ENCODE measurements at regions of chr16 and their contacts with region 1.

Region 1: DNA sequence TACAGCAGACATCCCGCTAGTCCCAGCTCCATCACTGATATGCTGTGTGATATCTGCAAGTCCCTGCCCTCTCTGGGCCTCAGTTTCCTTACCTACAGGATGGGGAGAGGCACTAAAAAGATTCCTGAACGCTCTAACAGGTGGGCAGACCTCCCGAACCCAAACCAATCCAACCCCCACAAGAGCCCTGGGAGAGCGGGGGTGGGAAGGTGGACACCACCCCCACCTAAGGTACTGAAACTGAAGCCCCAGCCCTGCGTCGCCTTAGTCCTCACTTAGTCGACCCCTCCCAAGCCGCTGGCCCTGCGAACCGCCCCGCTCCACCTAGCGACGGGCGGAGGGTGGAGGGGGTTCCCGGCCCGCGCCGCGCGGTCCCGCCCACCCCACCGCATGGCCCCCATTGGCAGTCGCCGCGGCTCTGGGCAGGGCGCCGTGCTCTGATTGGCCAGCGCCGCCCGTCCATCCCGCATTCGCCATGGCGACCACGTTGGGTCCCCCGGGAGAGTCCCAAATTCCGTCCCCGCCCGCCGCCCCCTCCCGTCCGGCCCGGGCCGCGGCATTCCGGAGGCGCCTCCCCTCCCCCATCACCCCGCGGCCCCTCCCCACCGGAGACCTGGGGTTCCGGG is 578 bp downstream of the CCDC102A start:
- DNase-seq: peak; percentile 97
- H3K4me3 Mint-ChIP-seq: peak overlapping the region; percentile 85
- H3K27ac Mint-ChIP-seq: peak overlapping the region; percentile 88
- H3K4me1 Mint-ChIP-seq: peaks cover 70% of the 10 kb centered on the region
- H3K27me3 Mint-ChIP-seq: no peaks in the 10 kb centered on the region

Region 2: DNA sequence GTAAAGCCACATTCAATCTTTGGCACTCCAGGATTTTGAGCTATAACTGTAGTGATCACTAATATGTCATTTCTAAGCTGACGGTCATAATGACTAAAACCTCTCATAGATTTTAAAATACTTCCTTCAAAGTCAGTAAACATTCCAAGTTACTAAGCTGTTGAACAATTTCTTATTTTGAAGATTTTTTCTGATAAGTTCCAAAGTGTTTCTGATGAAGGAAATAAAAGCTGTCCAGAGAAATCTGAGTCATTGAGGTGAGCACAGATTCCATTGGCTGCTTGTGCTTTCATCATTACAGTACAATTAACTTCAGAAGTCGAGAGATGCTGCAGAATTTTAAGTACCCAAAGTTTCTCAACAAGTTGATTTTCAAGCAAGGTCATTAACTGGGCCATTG is 522.6 kb before region 1 on chr16:
- CTCF ChIA-PET with region 1: no interaction called
- intact Hi-C with region 1: loop called (anchors 10 kb)
- DNase-seq: no peak
- H3K4me3 Mint-ChIP-seq: no peak overlapping the region
- H3K27ac Mint-ChIP-seq: peak overlapping the region; percentile 97
- H3K4me1 Mint-ChIP-seq: peaks cover 85% of the 10 kb centered on the region
- H3K27me3 Mint-ChIP-seq: no peaks in the 10 kb centered on the region

Region 3: GRCh38 chr16:57300387-57301125 is 235.2 kb before region 1 on chr16:
- CTCF ChIA-PET with region 1: no interaction called
- intact Hi-C with region 1: loop called (anchors 1 kb)
- DNase-seq: peak; percentile 100
- H3K4me3 Mint-ChIP-seq: no peak overlapping the region
- H3K27ac Mint-ChIP-seq: no peak overlapping the region
- H3K4me1 Mint-ChIP-seq: peaks cover 8% of the 10 kb centered on the region
- H3K27me3 Mint-ChIP-seq: peaks cover 2% of the 10 kb centered on the region

Region 4: GRCh38 chr16:57485916-57486857 is 49.6 kb before region 1 on chr16 and contains the start of gene DOK4:
- CTCF ChIA-PET with region 1: interaction called, 3 read pairs
- intact Hi-C with region 1: loop called (anchors 1 kb)
- DNase-seq: peak; percentile 79
- H3K4me3 Mint-ChIP-seq: peak within 1 kb of the TSS; percentile 77
- H3K27ac Mint-ChIP-seq: peak within 1 kb of the TSS; percentile 63
- H3K4me1 Mint-ChIP-seq: peaks cover 18% of the 10 kb centered on the region
- H3K27me3 Mint-ChIP-seq: no peaks in the 10 kb centered on the region
- total RNA-seq, gene DOK4: 5.0 to 6.2 TPM

Region 5: GRCh38 chr16:57600048-57600835 is 64.4 kb after region 1 on chr16:
- CTCF ChIA-PET with region 1: interaction called, 3 read pairs
- intact Hi-C with region 1: loop called (anchors 1 kb)
- DNase-seq: peak; percentile 65
- H3K4me3 Mint-ChIP-seq: no peak overlapping the region
- H3K27ac Mint-ChIP-seq: no peak overlapping the region
- H3K4me1 Mint-ChIP-seq: peaks cover 25% of the 10 kb centered on the region
- H3K27me3 Mint-ChIP-seq: no peaks in the 10 kb centered on the region

Region 6: DNA sequence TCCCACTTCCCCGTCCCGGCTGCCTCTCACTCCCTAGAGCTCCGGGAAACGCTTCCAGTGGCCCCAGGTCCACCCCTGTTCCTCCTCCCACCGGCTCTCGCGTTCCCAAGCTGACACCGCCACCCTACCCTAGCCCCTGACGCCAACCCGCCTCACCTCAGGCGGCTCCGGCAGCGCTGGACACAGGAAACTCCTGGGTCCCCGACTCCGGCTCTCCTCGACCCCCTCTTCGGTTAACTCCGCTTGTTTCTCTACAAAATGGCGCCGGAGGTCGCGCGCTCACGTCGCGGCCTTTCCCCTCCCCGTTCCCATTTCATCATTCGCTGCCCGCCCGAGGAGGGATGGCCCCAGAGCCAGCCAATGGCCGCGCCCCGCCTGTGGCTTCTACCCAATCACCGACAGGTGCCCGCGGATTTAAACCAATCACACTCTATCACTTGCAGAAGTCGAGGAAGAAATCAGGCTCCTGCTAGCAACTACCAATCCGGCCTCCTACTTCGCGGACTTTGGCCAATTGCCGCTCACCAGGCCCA is 1093.8 kb after region 1 on chr16 and contains the start of gene CNOT1:
- CTCF ChIA-PET with region 1: no interaction called
- intact Hi-C with region 1: loop called (anchors 2 kb)
- DNase-seq: peak; percentile 99
- H3K4me3 Mint-ChIP-seq: peak within 1 kb of the TSS; percentile 99
- H3K27ac Mint-ChIP-seq: peak within 1 kb of the TSS; percentile 100
- H3K4me1 Mint-ChIP-seq: peaks cover 25% of the 10 kb centered on the region
- H3K27me3 Mint-ChIP-seq: peaks cover 1% of the 10 kb centered on the region
- total RNA-seq, gene CNOT1: 283 to 287 TPM